Mammary epithelial cell (primary cell): ENCODE measurements at regions of chr3 and their contacts with region 1.

Region 1: DNA sequence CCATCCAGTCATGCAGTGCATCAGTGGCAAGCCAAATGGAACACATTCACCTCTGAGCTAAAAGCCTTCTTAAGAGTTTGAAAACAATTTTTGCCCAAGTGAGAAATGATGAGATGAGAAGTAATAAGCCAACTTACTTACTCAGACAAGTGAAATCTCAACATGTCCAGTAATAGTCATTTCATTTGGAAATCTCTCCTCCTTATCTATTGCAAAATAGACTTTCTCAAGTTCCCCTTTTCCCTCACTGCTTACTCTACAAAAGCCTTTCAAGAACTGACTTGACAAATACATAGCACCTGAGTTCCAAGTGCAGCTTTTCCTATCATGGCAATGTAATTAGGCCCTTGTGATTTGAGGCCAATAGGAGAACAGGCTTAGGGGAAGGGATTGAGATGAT is 282.3 kb downstream of the SLC9A9 start:
- DNase-seq: no peak
- H3K4me3 ChIP-seq: no peak overlapping the region
- H3K27ac ChIP-seq: no peak overlapping the region
- H3K4me1 ChIP-seq: no peaks in the 10 kb centered on the region
- H3K27me3 ChIP-seq: no peaks in the 10 kb centered on the region
- CTCF ChIP-seq: no peak

Region 2: GRCh38 chr3:142888481-142889211 is 677.3 kb before region 1 on chr3 and contains the start of gene PCOLCE2:
- CTCF ChIA-PET with region 1: no interaction called
- dilution Hi-C with region 1: no loop called
- in situ Hi-C with region 1: no loop called
- intact Hi-C with region 1: no loop called
- DNase-seq: peak; percentile 47
- H3K4me3 ChIP-seq: peak within 1 kb of the TSS; percentile 60 to 61 (median 60)
- H3K27ac ChIP-seq: no peak within 1 kb of the TSS
- H3K4me1 ChIP-seq: peaks cover 13% of the 10 kb centered on the region
- H3K27me3 ChIP-seq: no peaks in the 10 kb centered on the region
- CTCF ChIP-seq: no peak
- total RNA-seq, gene PCOLCE2: 2.8 to 3.5 TPM

Region 3: GRCh38 chr3:143613226-143613625 is 47.3 kb after region 1 on chr3:
- CTCF ChIA-PET with region 1: no interaction called
- dilution Hi-C with region 1: no loop called
- in situ Hi-C with region 1: no loop called
- intact Hi-C with region 1: loop called (anchors 5 kb)
- DNase-seq: peak; percentile 37
- H3K4me3 ChIP-seq: no peak overlapping the region
- H3K27ac ChIP-seq: no peak overlapping the region
- H3K4me1 ChIP-seq: no peaks in the 10 kb centered on the region
- H3K27me3 ChIP-seq: no peaks in the 10 kb centered on the region
- CTCF ChIP-seq: no peak